GM12878 (cell line): ENCODE measurements at regions of chr17 and their contacts with region 1.

Region 1: DNA sequence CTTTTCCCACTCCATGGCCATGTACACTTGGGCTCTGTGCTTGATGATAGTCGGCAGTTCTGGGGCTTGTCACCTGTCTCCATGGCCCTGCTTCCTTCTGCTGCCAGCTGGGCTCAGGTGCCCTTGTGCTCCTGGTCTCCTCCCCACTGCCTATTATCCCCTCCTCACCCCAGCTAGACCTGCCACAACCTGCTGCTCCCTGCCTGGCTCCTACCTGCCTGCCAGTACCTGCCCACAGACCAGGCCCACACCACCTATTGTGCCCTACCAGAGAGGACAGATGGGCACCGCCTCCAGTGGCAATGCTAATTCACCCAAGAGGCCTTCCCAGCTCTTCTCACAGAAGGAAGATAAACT is 538 bp upstream of the RAPGEFL1 start:
- DNase-seq: no peak
- ATAC-seq: no peak
- H3K4me3 ChIP-seq: no peak overlapping the region
- H3K27ac ChIP-seq: no peak overlapping the region
- H3K4me1 ChIP-seq: peaks cover 4% of the 10 kb centered on the region
- H3K27me3 ChIP-seq: no peaks in the 10 kb centered on the region
- CTCF ChIP-seq: no peak
- EP300 ChIP-seq: no peak
- POLR2A ChIP-seq: no peak
- RAD21 ChIP-seq: no peak

Region 2: GRCh38 chr17:40191237-40192208 is 14.8 kb after region 1 on chr17:
- CTCF ChIA-PET with region 1: interaction called, 18 read pairs
- POLR2A ChIA-PET with region 1: interaction called, 5 read pairs
- RAD21 ChIA-PET with region 1: no interaction called
- SMC1A ChIA-PET with region 1: interaction called, 6 read pairs
- in situ Hi-C with region 1: no loop called
- intact Hi-C with region 1: no loop called
- DNase-seq: peak; percentile 30
- ATAC-seq: peak; percentile 93
- H3K4me3 ChIP-seq: peak overlapping the region; percentile 83
- H3K27ac ChIP-seq: no peak overlapping the region
- H3K4me1 ChIP-seq: peaks cover 24% of the 10 kb centered on the region
- H3K27me3 ChIP-seq: no peaks in the 10 kb centered on the region; a peak in 1 of 4 replicates
- CTCF ChIP-seq: peak; percentile 82 to 91 (median 89)
- EP300 ChIP-seq: no peak
- POLR2A ChIP-seq: peak; percentile 57
- RAD21 ChIP-seq: peak; percentile 50; the same call in 1 of the 2 replicates